Posterior vena cava (tissue), 2 donors: ENCODE measurements at regions of chr22 and their contacts with region 1.

Region 1: DNA sequence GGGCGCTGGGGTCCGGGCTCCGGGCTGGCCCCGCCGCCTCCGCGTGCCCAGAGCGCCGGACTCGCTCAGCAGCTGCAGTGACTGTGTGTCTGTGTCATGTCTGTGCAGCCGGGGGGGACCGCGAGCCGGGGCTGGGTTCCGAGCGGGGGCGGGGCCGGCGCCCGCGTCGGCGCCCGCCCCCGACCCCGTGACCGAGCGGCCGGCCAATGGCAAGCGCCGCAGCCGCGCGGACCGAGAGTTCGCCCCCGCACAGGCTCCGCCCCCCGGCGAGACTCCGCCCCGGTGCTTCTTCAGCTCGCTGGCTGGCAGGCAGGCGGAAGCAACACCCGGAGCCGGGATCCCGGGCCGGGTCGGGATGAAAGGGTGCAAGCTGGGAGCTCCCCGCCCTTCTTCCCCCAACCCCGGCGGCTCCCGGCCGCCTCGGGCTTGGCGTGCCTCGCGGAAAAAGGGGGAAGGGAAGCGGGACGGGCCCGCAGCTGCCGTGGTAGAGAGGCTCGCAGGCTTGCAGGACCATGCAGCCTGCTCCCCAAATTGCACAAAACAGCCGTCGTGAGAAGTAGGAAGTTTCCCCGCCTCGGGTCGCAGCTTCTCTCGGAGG is 750 bp upstream of the LARGE1 start:
- DNase-seq: peak; percentile 99

Region 2: DNA sequence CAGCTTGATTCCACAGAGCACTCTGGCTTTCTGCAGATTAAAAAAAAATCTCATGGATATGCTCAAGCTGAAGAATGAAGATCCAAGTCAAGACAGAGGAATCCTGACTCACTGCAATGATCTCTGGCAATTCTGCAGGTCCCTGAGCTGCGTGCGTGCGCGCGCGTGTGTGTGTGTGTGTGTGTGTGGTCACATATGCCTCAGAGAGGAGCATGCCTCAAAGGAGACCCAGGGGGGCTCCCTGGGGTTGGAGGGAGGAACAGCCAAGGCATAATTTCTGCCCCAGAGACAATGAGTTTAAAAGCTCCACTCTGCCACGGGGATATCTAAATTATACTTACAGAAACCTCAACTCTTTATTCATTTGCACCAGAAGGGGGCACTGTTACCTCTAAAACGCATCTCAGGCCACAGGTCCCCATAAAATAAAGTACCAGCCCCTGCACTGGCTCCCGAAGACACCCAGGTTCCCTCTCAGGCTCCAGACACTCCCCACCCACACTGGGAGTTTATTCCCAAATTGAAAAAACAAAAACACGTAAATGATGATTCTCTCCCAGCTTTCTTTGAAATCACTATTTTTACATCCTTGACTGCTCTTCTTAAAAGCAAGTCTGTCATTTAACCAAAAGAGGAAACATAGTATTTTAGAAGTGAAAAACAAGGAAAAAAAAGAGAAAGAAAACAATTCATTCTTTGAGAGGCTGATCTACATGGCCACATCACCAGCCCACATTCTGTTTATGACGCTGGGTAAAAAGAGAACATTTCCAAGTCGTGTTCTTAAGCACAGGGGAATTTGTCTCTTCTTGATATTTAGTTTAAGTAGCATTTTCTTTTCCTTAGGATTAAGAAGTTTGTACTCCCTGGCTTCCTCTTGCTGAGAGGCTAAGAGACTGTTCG is 401.7 kb before region 1 on chr22:
- intact Hi-C with region 1: loop called in 1 of 2 experiments (anchors 5 kb)
- DNase-seq: peak; percentile 86

Region 3: GRCh38 chr22:33796494-33796893 is 124.5 kb before region 1 on chr22:
- intact Hi-C with region 1: loop called in 1 of 2 experiments (anchors 10 kb)
- DNase-seq: no peak

Region 4: GRCh38 chr22:33867115-33867866 is 53.7 kb before region 1 on chr22:
- intact Hi-C with region 1: loop called (anchors 5 to 10 kb)
- DNase-seq: no peak

Region 5: DNA sequence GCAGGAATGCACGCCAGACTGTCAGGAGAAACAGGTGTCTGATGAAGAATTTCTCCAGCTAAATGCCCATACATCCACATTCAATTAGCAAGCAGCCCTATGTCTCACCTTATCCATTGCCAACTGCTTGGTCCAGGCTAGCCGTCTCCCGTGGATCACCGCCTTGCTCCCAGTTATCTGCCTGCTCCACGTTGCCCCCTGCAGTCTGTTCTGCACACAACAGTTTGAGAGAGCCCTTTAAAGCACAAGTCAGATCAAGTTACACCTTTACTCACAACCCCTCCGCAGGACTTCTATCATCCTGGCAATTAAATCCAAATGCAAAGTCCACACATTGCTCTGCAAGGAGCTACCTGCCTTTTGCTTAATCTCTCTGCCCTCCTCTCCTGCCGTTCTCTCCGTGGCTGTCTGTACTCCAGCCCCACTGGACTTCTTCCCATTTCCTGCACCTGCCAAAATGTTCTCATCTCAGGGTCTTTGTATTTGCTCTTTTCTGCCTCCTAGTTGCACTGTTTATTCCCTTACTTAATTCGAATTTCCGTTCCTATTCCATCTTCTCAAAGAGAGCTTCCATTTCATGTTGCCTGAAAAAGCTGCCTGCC is 184.5 kb after region 1 on chr22:
- intact Hi-C with region 1: loop called in 1 of 2 experiments (anchors 10 kb)
- DNase-seq: no peak